MCF 10A (cell line): ENCODE measurements at regions of chr9 and their contacts with region 1.

Region 1: GRCh38 chr9:31272456-31273295 is 1111.8 kb upstream of the ACO1 start:
- DNase-seq: peak; percentile 44
- H3K4me3 Mint-ChIP-seq: no peak overlapping the region
- H3K27ac Mint-ChIP-seq: no peak overlapping the region
- H3K4me1 Mint-ChIP-seq: peaks cover 12% of the 10 kb centered on the region
- H3K27me3 Mint-ChIP-seq: no peaks in the 10 kb centered on the region
- CTCF ChIP-seq: no peak

Region 2: GRCh38 chr9:31185831-31186230 is 86.8 kb before region 1 on chr9:
- CTCF ChIA-PET with region 1: no interaction called
- POLR2A ChIA-PET with region 1: no interaction called
- intact Hi-C with region 1: loop called (anchors 10 kb)
- DNase-seq: peak; percentile 57
- H3K4me3 Mint-ChIP-seq: no peak overlapping the region
- H3K27ac Mint-ChIP-seq: peak overlapping the region; percentile 66
- H3K4me1 Mint-ChIP-seq: peaks cover 18% of the 10 kb centered on the region
- H3K27me3 Mint-ChIP-seq: no peaks in the 10 kb centered on the region
- CTCF ChIP-seq: no peak

Region 3: GRCh38 chr9:31639451-31639850 is 366.8 kb after region 1 on chr9:
- CTCF ChIA-PET with region 1: no interaction called
- POLR2A ChIA-PET with region 1: no interaction called
- intact Hi-C with region 1: no loop called
- DNase-seq: no peak
- H3K4me3 Mint-ChIP-seq: no peak overlapping the region
- H3K27ac Mint-ChIP-seq: no peak overlapping the region
- H3K4me1 Mint-ChIP-seq: no peaks in the 10 kb centered on the region
- H3K27me3 Mint-ChIP-seq: no peaks in the 10 kb centered on the region
- CTCF ChIP-seq: no peak